ENCODE measurements at regions of chr1 and their contacts with region 1.

Region 1: DNA sequence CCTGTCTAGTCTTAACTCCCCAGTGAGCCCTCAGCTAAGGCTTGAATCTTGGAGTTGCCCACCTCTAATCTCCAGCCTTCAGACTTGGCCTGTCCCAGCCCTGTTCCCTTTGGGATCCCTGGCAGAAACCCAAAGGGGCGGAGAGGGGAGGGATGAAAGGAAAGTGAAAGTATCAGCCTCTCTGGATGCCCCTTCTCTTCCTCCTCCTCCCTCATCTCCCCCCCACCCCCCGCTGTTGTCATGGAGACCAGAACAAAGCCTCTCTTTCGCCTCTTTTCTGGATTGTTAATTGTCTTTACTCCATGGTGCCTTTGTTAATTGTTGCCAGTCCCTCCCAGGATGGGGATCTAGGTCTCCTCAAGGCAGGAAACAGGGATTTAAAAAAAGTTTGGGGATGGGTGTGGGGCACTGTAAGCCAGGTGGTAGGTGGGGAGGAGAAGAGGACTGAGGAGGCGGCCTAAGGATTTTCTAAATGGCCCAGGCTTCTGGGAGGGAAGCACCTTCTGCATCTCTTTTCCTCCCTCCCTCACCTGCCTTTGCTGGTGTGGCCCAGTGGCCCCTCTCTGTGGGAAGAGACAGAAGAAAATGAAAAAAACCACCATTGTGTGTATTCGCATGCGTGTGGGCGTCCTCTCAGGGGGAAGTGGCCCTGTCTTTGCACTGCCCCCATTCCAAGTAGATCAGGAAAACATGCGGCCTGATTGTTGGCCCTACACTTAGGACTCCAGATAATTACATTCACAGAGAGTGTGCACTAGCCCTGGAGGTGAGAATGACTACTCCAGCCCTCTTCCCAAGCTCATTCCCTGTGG is 7.5 kb upstream of the SOX13 start:
- DNase-seq: no peak
- ATAC-seq: no peak
- H3K4me3 Mint-ChIP-seq: no peak overlapping the region
- H3K27ac Mint-ChIP-seq: no peak overlapping the region
- H3K4me1 Mint-ChIP-seq: no peaks in the 10 kb centered on the region
- H3K27me3 Mint-ChIP-seq: peaks cover 18% of the 10 kb centered on the region
- CTCF ChIP-seq: no peak

Region 2: GRCh38 chr1:203880606-203881005 is 184.8 kb before region 1 on chr1:
- CTCF ChIA-PET with region 1: no interaction called
- POLR2A ChIA-PET with region 1: no interaction called
- intact Hi-C with region 1: loop called (anchors 5 kb)
- DNase-seq: no peak
- ATAC-seq: no peak
- H3K4me3 Mint-ChIP-seq: no peak overlapping the region
- H3K27ac Mint-ChIP-seq: no peak overlapping the region
- H3K4me1 Mint-ChIP-seq: no peaks in the 10 kb centered on the region
- H3K27me3 Mint-ChIP-seq: no peaks in the 10 kb centered on the region
- CTCF ChIP-seq: no peak

Measured in activated B cell treated with CpG ODN at 0.5 μM for 24 hours (primary cell).